Activated CD4-positive, alpha-beta T cell treated with anti-CD3 and anti-CD28 coated beads for 36 hours (primary cell): ENCODE measurements at regions of chr1 and their contacts with region 1.

Region 1: GRCh38 chr1:193019442-193020026 is 39.6 kb downstream of the UCHL5 start:
- DNase-seq: no peak
- ATAC-seq: no peak
- H3K4me3 Mint-ChIP-seq: no peak overlapping the region
- H3K27ac Mint-ChIP-seq: no peak overlapping the region
- H3K4me1 Mint-ChIP-seq: no peaks in the 10 kb centered on the region
- H3K27me3 Mint-ChIP-seq: no peaks in the 10 kb centered on the region

Region 2: GRCh38 chr1:192974701-192975100 is 44.8 kb before region 1 on chr1:
- CTCF ChIA-PET with region 1: no interaction called
- POLR2A ChIA-PET with region 1: no interaction called
- intact Hi-C with region 1: no loop called
- DNase-seq: no peak
- ATAC-seq: no peak
- H3K4me3 Mint-ChIP-seq: no peak overlapping the region
- H3K27ac Mint-ChIP-seq: no peak overlapping the region
- H3K4me1 Mint-ChIP-seq: peaks cover 7% of the 10 kb centered on the region
- H3K27me3 Mint-ChIP-seq: no peaks in the 10 kb centered on the region

Region 3: DNA sequence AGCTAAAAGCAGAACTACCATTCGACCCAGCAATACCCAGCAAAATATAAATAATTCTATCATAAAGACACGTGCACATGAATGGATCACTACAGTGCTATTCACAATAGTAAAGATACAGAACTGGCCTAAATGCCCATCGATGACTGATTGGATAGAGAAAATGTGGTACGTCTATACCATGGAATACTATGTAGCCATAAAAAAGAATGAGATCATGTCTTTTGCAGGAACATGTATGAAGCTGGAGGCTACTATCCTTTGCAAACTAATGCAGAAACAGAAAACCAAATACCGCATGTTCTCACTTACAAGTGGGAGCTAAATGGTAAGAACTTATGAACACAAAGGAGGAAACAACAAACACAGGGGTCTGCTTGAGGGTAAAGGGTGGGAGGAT is 13.7 kb before region 1 on chr1:
- CTCF ChIA-PET with region 1: interaction called, 10 read pairs
- POLR2A ChIA-PET with region 1: no interaction called
- intact Hi-C with region 1: no loop called
- DNase-seq: no peak
- ATAC-seq: no peak
- H3K4me3 Mint-ChIP-seq: no peak overlapping the region
- H3K27ac Mint-ChIP-seq: no peak overlapping the region
- H3K4me1 Mint-ChIP-seq: peaks cover 10% of the 10 kb centered on the region
- H3K27me3 Mint-ChIP-seq: no peaks in the 10 kb centered on the region